Cardiac septum (tissue), 1 donor: ENCODE measurements at regions of chr7 and their contacts with region 1.

Region 1: GRCh38 chr7:40057292-40057691 is 77.1 kb downstream of the MPLKIP start:
- DNase-seq: no peak

Region 2: DNA sequence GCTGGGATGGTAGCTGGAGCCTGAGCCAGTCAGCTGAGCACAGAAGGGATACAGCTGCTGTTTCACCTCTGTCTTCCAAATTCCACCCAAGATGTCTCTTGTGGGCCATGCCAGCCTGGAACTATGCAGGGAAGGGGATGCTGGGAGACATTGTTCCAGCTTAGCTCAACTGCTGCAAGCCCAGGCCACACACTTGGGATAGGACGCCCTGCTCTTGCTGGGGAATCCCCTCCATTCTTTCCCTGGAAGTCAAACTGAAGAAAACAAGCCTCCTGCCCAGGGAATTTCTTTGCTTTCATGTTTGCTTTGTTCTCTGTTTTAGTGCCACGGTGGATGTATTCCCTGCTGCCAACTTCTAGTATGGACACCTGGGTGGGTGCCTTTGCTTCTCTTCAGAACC is 162.4 kb before region 1 on chr7:
- intact Hi-C with region 1: loop called (anchors 1 kb)
- DNase-seq: no peak